Left ventricle myocardium superior (tissue), 1 donor: ENCODE measurements at regions of chr11 and their contacts with region 1.

Region 1: GRCh38 chr11:124586238-124586860 is 16.6 kb downstream of the OR8A1 start:
- DNase-seq: peak; percentile 76
- ATAC-seq: no peak

Region 2: DNA sequence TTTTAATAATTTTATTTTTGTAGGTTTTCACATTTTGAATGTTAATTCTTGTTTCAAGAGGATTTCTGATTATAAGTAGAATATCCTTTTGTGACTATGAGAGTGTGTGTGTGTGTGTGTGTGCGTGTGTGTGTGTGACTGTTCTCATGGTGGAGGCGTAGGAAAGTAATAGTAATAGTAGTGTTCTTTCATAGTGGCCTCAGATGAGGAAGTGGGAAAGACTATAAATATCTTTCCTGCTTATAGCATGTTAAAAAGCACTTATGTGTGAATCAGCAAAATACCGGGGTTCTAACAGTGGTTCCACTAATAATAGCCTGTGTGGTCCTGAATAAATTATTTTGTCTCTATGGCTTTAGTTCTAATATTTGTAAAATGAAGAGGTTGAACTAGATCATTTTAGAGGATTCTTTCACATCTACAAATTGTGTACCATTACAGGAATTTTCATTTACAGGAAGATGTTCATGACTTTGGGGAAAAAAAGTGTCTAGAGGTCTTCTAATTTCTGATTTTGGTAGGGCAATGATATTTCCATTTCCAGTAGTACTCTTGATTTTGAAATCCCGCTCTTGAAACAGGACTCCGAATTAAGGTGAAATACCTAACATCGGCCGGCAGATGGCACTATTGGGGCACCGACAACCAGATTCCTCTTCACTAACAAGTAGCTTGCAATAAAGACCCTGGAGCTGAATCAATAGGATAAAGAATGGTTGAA is 515.3 kb before region 1 on chr11:
- intact Hi-C with region 1: loop called (anchors 10 kb)
- DNase-seq: peak; percentile 44
- ATAC-seq: peak; percentile 45

Region 3: GRCh38 chr11:124415356-124415923 is 170.9 kb before region 1 on chr11:
- intact Hi-C with region 1: loop called (anchors 2 kb)
- DNase-seq: no peak
- ATAC-seq: no peak

Region 4: DNA sequence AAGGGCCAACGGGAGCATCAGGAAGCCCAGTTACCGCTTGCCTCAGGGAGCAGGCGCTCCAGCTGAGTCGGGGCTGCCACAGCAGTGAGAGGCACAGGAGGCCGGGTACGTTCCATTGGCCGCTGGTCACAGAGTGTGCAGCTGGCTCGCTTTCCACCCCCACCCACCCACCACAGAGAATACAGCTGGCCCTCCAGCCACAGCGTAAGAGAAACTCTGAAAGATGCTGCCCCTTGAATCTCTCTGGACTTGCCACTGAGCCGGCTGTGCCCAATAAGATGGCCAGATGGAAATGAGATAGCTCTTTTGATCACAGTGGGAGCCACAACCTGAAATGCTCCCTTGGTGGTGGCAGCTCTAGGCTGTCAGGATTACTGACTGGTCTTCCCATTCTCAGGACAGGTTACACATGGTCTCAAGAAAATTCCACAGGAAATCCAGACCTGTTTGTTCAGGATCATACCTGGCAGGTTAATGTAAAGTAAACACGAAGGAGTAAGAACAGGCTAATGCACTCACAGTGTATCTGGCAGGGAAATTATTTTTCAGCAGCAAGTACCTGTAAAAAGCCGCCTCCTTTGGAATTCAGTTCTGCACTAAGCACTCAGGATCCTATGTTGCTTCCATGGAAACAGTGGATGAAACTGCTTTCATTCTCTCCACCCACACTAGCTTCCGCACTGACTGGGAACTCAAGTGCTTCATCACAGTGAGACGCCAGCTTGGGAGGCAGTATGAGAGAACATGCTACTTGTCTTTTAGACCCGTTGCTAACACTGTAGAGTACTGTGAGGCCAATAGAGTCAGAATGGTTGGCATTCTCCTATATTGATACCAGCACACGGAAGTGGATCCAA is 70.7 kb after region 1 on chr11:
- intact Hi-C with region 1: no loop called
- DNase-seq: no peak
- ATAC-seq: no peak